Dorsolateral prefrontal cortex (tissue), 120 donors: ENCODE measurements at regions of chr6 and their contacts with region 1.

Region 1: DNA sequence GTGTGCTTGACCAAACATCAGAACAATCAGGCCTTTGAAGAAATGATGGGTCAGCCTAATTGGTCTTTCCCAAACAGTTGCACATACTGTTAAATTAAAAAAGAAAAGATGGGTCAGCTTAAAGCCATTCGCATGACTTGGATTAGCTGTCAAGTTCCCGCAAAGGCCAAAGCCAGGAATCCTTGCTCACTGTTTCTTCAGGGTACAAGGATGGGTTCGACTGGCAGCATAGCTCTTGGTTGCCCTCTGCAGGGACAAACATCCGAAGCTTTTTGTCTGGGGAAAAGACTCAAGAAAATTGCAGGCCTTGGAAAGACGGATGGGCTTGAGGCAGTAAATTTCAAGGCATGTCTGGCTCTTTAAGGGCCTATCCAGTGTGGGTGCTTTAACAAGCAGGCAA is 168.0 kb downstream of the HDGFL1 start:
- DNase-seq: peak in 9 of 10 donors; percentile 7 to 72 (median 54)
- H3K4me3 ChIP-seq: no peak overlapping the region
- H3K27ac ChIP-seq: no peak overlapping the region
- H3K27me3 ChIP-seq: no peaks in the 10 kb centered on the region
- CTCF ChIP-seq: peak; percentile 37 to 88 (median 69)

Region 2: GRCh38 chr6:22575190-22575589 is 162.1 kb before region 1 on chr6:
- intact Hi-C with region 1: no loop called
- DNase-seq: no peak
- H3K4me3 ChIP-seq: no peak overlapping the region
- H3K27ac ChIP-seq: no peak overlapping the region
- H3K27me3 ChIP-seq: peaks cover 0 to 9% (median 0%) of the 10 kb centered on the region in 45 donors
- CTCF ChIP-seq: no peak

Region 3: DNA sequence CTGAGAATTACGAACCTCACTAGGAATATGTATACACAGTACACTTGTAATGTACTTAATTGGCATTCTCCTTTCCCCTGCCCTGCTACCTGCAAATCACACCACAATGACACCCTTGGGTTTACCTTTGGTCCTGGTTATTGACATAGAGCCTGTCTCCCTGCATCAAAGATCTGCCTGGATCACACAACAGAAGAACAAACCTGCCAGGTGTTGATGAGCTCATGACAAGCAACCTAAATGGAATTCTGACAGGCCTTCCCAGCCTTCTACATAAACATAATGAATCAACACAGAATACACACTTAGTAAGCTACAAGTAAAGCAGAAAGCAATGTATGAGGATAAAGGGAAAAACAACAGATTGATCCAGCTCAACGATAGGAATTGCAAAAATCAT is 72.4 kb before region 1 on chr6:
- intact Hi-C with region 1: loop called in 1 of 2 experiments (anchors 5 kb)
- DNase-seq: no peak
- H3K4me3 ChIP-seq: no peak overlapping the region
- H3K27ac ChIP-seq: no peak overlapping the region
- H3K27me3 ChIP-seq: no peaks in the 10 kb centered on the region
- CTCF ChIP-seq: no peak